Aorta (tissue), 5 donors: ENCODE measurements at regions of chr1 and their contacts with region 1.

Region 1: DNA sequence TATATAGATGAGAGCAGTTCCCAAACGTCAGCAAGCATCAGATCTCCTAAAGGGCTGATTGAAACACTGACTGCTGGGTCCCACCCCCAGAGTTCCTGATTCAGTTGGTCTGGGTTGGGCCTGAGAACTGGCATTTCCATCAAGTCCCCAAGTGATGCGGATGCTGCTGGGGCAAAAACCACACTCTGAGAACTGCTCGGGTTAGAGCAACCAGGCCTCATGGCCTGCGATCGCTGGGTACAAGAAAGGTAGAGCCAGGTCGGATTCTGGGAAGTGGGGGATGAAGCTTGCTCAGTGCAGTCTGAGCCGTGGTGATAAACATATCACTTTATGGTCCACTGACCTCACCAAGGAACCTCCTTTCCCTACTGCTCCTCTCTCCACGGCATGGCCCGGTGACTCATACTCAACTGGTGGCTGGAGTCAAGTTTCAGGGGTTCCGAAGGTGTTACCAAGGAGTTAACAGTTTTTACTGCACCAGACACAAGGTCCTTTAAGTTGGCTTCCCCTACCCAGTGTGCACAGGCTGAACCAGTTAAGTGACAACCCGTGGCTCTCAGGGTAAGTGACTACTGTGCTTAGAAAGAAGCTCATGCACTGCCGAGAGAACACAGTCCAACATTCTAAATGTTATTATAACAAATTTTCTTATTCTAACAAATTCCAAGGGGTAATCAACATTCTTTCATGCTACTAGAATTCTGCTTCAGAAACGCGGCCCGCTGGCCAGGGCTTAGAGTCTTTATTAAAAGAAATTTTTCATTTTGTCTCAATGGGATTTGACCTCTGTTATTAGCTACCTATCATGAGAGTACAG is 153.5 kb downstream of the TGFBR3 start:
- DNase-seq: no peak
- ATAC-seq: peak; percentile 33
- H3K4me3 ChIP-seq: no peak overlapping the region
- H3K27ac ChIP-seq: no peak overlapping the region
- H3K4me1 ChIP-seq: peaks cover 3 to 8% of the 10 kb centered on the region in 2 donors
- H3K27me3 ChIP-seq: no peaks in the 10 kb centered on the region

Region 2: GRCh38 chr1:91697416-91697815 is 35.1 kb before region 1 on chr1:
- intact Hi-C with region 1: loop called in 1 of 2 experiments (anchors 5 kb)
- DNase-seq: no peak
- ATAC-seq: no peak
- H3K4me3 ChIP-seq: no peak overlapping the region
- H3K27ac ChIP-seq: no peak overlapping the region
- H3K4me1 ChIP-seq: peaks cover 2 to 5% of the 10 kb centered on the region in 2 donors
- H3K27me3 ChIP-seq: no peaks in the 10 kb centered on the region

Region 3: DNA sequence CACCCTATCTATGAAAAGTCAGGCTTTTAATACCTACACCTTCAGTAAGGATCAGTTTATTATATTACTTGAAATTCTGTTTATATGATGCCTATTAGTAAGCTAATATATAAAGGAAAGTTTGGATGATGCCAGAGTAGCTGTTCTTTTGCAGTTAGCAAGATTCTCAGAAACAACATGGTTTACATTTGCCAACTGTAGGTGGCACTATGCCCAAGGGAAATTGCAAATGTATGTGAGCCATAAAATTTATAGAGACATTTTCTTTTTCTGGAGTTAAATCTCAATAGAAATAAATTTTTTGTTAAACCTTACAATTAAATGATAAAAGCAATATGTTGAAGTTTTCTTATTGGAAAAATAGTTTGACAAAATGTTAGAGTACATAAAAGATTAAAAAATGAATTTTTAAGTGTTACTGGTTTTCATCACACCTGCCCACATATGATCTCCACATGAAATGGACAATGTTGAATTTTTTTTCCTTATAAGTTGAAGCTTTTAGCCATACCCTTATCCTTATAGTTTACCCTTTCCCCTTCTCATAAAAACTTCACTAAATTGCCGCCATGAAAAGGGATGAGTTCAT is 265.2 kb after region 1 on chr1:
- intact Hi-C with region 1: no loop called
- DNase-seq: no peak
- ATAC-seq: no peak
- H3K4me3 ChIP-seq: no peak overlapping the region
- H3K27ac ChIP-seq: no peak overlapping the region
- H3K4me1 ChIP-seq: no peaks in the 10 kb centered on the region
- H3K27me3 ChIP-seq: no peaks in the 10 kb centered on the region